ENCODE measurements at regions of chr19 and their contacts with region 1.

Region 1: GRCh38 chr19:56252699-56253422 is 19.7 kb upstream of the EDDM13 start:
- DNase-seq: peak; percentile 68
- ATAC-seq: peak; percentile 79 to 94

Region 2: DNA sequence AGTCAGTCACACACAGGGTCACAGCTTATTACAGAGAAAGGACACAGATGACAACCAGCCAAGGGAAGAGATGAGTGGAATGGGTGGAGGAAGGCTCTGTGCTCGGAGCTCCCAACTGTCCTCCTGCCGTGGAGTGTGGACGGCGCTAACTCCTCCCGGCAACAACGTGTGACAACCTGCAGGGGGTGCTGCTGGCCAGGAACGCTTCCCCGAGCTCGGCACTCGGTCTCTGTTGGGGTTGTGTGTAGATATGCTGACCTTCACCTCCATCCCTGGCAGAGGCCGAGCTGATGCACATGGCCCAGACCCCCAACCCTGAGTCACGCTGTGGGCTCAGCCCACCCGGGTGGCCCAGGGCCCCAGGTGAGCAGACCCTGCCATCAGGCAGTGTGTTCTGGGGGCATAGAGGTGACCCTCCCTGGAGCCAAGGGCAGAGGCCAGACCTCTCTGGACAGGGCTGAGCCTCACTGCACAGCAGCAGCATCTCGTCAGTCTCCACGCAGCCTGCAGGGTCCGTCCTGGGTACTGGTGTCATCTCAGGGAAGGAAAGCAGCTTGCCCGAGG is 97.7 kb before region 1 on chr19:
- intact Hi-C with region 1: no loop called
- DNase-seq: no peak
- ATAC-seq: peak in 1 of 2 donors; percentile 30

Region 3: DNA sequence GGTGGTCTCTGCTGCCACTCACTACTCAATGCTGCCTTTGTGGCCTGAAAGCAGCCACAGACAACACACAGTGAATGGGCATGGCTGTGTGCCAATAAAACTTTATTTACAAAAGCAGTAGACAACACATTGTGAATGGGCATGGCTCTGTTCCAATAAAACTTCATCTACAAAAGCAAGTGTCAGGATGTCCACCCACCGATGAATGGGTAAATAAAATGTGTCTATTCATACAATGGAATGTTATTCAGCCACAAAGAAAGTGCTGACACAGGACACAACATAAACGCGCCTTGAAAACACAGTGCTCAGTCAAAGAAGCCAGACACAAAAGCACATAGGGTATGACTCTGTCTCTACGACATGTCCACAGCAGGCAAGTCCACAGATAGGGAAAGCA is 41.7 kb after region 1 on chr19:
- intact Hi-C with region 1: no loop called
- DNase-seq: no peak
- ATAC-seq: no peak

Region 4: GRCh38 chr19:56333505-56333904 is 80.6 kb after region 1 on chr19:
- intact Hi-C with region 1: loop called in 1 of 2 experiments (anchors 5 kb)
- DNase-seq: no peak
- ATAC-seq: no peak

Region 5: DNA sequence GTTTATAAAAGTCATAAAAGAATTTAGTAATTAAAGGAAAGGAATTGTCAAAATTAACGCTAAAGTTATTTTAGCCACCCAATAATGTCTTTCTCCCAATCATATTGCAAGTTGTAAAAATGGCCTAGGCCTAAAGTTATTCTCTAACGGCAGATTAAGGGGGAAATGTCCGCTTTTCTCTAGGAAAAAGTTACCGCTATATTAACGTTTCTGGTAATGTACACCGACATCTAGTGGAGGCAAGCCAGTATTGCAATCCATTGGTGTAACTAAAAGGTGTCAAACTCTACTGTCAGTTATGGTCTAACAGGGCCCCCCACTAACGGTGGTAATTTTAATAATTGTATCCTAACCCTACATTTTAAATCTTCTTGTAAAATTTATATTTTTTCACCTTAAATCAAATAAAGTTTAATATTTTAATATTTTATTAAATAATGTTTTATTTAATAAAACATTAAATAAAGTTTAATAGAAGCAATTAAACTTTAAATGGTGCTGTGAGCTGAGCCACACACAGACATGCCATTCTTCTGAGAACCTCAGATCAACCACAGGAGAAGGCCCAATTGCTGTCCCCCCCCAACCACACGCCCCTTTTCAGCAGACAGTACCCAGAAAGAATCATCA is 97.7 kb after region 1 on chr19:
- intact Hi-C with region 1: loop called (anchors 5 to 10 kb)
- DNase-seq: peak; percentile 39
- ATAC-seq: peak in 1 of 2 donors; percentile 44